Cardiac septum (tissue), 1 donor: ENCODE measurements at regions of chrX and their contacts with region 1.

Region 1: DNA sequence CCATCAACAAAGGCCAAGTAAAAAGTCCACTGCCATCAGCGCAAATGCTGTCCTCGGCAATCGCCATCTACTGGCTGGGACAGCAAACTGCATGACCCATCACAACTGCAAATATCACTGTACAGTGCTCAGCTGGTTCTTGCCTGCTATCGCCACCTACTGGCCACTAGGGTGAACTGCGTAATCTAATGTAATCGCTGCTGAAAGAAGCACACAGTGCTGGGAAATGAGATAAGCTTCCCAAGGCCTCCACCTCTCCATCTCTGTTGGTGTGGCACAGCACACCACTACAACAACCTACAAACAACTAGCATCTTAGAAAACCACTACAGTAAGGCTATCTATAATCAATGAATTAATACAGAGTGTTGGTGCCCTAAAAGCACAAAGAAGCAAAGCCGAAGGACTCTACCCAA is 298.3 kb downstream of the TEX13A start:
- DNase-seq: no peak

Region 2: DNA sequence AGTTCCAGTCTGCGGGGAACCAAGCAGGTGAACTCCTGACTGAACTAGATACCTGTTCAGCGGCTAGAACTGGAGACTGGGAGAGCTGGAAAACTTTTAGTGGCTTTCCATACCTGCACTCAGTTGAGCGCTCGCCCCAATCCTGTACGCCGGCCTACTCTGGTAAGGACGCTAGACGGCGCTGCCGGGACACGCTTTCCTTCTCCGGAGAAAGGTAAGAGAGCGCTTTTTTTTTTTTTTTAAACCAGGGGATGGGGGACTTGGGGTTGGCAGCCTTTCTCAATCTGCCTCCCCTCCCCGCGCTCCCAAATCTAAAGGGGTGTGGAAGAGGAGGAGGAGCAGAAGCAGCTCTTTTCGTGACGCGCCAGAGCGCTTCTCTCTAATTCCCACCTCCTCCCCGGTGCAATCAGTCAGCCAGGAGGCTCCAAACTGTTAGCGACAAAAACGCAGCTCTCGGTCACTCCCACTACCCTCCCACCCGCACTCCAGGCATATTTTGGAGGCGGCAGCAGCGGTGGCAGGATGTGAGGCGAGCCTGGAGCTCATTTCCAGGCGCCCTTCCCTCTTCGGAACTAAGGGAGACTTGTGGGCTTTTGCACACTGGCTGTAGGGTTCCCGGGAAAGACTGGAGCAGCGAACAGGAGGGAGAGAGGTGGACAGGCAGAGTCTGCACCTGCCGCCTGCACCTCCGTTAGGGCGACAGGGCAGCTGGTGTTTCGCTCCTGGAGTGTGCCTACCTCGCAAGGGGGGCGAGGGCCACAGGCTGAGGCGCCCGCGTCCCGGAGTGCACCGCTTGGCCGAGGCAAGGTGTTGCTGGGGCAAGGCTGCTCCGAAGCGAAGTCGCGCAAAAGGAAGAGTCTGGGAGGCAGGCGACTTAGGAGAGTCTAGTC is 356.2 kb before region 1 on chrX and contains the start of gene IL1RAPL2:
- intact Hi-C with region 1: loop called (anchors 10 kb)
- DNase-seq: no peak
- total RNA-seq, gene IL1RAPL2: not detected

Region 3: GRCh38 chrX:105038672-105039328 is 116.6 kb after region 1 on chrX:
- intact Hi-C with region 1: no loop called
- DNase-seq: no peak